ENCODE measurements at regions of chr17 and their contacts with region 1.

Region 1: DNA sequence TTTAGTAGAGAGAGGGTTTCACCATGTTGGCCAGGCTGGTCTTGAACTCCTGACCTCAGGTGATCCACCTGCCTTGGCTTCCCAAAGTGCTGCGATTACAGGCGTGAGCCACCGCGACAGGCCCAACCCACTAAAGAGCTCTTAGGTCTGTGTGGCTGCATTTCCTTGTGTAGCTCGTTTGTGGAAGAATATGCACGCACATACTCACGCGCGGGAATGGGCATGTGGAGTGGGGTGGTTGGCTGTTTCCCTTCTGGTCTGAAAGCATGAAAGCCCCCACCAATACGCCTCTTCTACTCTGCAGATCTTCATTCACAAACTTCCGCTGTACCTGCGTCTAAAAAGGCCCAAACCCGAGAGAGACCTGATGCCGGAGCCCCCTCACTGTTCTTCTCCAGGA is 10.1 kb downstream of the CHRNB1 start:
- DNase-seq: no peak
- H3K4me3 Mint-ChIP-seq: peak overlapping the region; percentile 93
- H3K27ac Mint-ChIP-seq: peak overlapping the region; percentile 96
- H3K4me1 Mint-ChIP-seq: peaks cover 13% of the 10 kb centered on the region
- H3K27me3 Mint-ChIP-seq: no peaks in the 10 kb centered on the region

Region 2: GRCh38 chr17:7344399-7344798 is 110.6 kb before region 1 on chr17:
- CTCF ChIA-PET with region 1: no interaction called
- POLR2A ChIA-PET with region 1: no interaction called
- intact Hi-C with region 1: no loop called
- DNase-seq: no peak
- H3K4me3 Mint-ChIP-seq: no peak overlapping the region
- H3K27ac Mint-ChIP-seq: no peak overlapping the region
- H3K4me1 Mint-ChIP-seq: peaks cover 11% of the 10 kb centered on the region
- H3K27me3 Mint-ChIP-seq: no peaks in the 10 kb centered on the region

Region 3: DNA sequence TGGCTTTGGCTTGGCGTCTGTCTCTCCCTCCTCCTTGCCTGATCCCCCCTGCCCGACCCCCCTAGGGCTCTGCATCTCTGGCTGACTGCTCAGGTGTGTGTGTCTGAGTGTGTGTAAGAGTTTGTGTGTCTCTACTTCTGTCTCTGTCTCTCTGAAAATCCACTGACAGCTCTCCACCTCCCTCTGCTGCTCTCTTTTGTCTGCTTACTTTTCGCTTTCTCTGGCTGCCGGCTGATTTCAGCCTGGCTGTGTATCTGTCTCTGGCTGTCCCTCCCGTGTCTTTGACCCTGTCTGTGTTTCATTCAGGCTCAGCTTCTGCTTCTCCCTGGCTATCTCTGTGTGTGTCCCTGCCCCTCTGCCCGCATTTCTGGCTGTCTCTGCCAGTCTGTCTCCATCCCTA is 38.7 kb before region 1 on chr17:
- CTCF ChIA-PET with region 1: no interaction called
- POLR2A ChIA-PET with region 1: no interaction called
- intact Hi-C with region 1: no loop called
- DNase-seq: no peak
- H3K4me3 Mint-ChIP-seq: no peak overlapping the region
- H3K27ac Mint-ChIP-seq: no peak overlapping the region
- H3K4me1 Mint-ChIP-seq: no peaks in the 10 kb centered on the region
- H3K27me3 Mint-ChIP-seq: no peaks in the 10 kb centered on the region

Region 4: GRCh38 chr17:7444682-7445618 is 10.0 kb before region 1 on chr17 and contains the start of gene CHRNB1:
- CTCF ChIA-PET with region 1: interaction called, 4 read pairs
- POLR2A ChIA-PET with region 1: no interaction called
- intact Hi-C with region 1: loop called (anchors 1 kb)
- DNase-seq: peak; percentile 13
- H3K4me3 Mint-ChIP-seq: peak within 1 kb of the TSS; percentile 53
- H3K27ac Mint-ChIP-seq: no peak within 1 kb of the TSS
- H3K4me1 Mint-ChIP-seq: peaks cover 29% of the 10 kb centered on the region
- H3K27me3 Mint-ChIP-seq: peaks cover 51% of the 10 kb centered on the region
- total RNA-seq, gene CHRNB1: 7.7 to 8.5 TPM

Region 5: DNA sequence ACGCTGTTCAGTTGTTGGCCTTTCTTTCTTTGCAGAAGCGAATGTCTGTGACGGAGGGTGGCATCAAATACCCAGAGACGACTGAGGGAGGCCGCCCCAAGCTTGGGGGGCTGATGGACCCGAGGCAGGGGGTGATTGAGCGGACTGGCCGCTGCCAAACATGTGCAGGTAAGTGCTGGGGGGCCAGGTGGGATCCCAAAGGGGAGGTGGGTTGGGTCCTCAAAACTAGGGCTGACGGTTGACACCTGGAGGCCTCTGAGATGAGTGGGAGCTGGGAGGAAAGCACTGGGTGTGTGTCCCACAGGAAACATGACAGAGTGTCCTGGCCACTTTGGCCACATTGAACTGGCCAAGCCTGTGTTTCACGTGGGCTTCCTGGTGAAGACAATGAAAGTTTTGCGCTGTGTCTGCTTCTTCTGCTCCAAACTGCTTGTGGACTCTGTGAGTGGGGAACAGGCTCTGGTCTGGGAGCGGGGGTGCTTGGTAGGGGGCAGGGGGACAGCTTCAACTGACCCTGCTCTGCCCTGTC is 41.0 kb after region 1 on chr17:
- CTCF ChIA-PET with region 1: no interaction called
- POLR2A ChIA-PET with region 1: no interaction called
- intact Hi-C with region 1: no loop called
- DNase-seq: no peak
- H3K4me3 Mint-ChIP-seq: no peak overlapping the region
- H3K27ac Mint-ChIP-seq: peak overlapping the region; percentile 18
- H3K4me1 Mint-ChIP-seq: peaks cover 22% of the 10 kb centered on the region
- H3K27me3 Mint-ChIP-seq: no peaks in the 10 kb centered on the region

Measured in activated CD4-positive, alpha-beta memory T cell treated with anti-CD3 and anti-CD28 coated beads for 36 hours (primary cell).